Activated naive CD4-positive, alpha-beta T cell treated with anti-CD3 and anti-CD28 coated beads for 36 hours (primary cell): ENCODE measurements at regions of chrX and their contacts with region 1.

Region 1: GRCh38 chrX:23907498-23908218 is at the starts of genes APOO and CXorf58:
- DNase-seq: peak; percentile 93
- H3K4me3 Mint-ChIP-seq: peak within 1 kb of the TSS; percentile 75
- H3K27ac Mint-ChIP-seq: peak within 1 kb of the TSS; percentile 91
- H3K4me1 Mint-ChIP-seq: peaks cover 21% of the 10 kb centered on the region
- H3K27me3 Mint-ChIP-seq: no peaks in the 10 kb centered on the region
- total RNA-seq, gene APOO: 41.3 to 49.5 TPM
- total RNA-seq, gene CXorf58: 0.20 TPM in 1 of 2 experiments, not detected in the other

Region 2: DNA sequence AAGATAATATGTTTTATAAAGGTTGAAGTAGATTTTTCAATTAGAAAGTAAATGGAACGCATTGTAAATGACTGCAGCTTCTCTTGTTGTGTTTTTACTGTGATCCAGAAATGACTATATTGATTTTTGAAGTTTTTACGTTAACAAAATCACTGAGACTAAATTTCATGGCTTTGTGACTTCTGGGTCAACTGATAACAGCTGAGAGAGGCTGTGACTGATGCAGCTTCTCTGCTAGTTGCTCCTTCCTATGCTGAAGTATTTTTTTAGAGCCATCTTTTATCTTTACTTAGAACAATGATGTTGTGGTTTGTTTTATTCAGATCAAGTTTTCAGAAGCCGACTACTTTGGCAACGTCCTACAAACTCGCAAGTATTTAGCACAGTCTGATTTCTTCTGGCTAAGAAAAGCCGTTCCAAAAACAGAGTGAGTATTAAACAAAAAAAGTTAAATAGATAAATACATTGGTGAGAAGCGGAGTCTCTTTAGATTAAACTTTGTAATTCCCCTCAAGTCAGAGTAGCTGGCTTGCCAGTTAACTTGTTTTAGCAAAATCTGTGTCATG is 1729.6 kb before region 1 on chrX:
- CTCF ChIA-PET with region 1: no interaction called
- intact Hi-C with region 1: no loop called
- DNase-seq: no peak
- H3K4me3 Mint-ChIP-seq: no peak overlapping the region
- H3K27ac Mint-ChIP-seq: no peak overlapping the region
- H3K4me1 Mint-ChIP-seq: no peaks in the 10 kb centered on the region
- H3K27me3 Mint-ChIP-seq: no peaks in the 10 kb centered on the region

Region 3: DNA sequence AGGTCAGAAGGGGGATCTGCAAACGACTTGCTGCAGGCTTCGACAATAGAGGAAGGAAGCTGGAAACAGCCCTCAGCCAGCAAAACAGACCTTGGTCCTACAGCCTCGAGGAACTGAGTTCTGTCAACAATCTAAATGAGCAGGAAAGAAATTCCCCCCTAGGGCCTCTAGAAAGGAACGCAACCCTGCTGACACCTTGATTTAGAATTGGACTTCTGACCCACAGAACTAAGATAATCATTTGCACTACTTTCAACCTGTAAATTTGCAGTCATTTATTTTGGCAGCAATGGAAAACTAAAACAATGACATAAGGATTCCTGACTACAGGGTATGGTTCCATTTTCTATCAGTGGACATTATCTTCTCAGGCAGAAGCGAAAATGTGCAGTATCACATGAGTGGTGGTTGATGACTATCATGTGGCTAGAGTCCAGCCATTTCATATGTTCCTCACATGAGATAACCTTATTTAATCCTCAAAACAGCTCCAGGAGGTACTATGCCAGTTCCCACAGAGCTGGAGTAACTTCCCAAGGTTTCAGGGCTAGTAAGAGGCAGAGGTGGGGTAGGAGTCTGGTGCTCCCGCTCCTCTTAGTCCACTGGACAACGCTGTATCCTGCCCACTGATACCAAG is 63.0 kb before region 1 on chrX:
- CTCF ChIA-PET with region 1: no interaction called
- intact Hi-C with region 1: no loop called
- DNase-seq: no peak
- H3K4me3 Mint-ChIP-seq: no peak overlapping the region
- H3K27ac Mint-ChIP-seq: no peak overlapping the region
- H3K4me1 Mint-ChIP-seq: no peaks in the 10 kb centered on the region
- H3K27me3 Mint-ChIP-seq: no peaks in the 10 kb centered on the region

Region 4: DNA sequence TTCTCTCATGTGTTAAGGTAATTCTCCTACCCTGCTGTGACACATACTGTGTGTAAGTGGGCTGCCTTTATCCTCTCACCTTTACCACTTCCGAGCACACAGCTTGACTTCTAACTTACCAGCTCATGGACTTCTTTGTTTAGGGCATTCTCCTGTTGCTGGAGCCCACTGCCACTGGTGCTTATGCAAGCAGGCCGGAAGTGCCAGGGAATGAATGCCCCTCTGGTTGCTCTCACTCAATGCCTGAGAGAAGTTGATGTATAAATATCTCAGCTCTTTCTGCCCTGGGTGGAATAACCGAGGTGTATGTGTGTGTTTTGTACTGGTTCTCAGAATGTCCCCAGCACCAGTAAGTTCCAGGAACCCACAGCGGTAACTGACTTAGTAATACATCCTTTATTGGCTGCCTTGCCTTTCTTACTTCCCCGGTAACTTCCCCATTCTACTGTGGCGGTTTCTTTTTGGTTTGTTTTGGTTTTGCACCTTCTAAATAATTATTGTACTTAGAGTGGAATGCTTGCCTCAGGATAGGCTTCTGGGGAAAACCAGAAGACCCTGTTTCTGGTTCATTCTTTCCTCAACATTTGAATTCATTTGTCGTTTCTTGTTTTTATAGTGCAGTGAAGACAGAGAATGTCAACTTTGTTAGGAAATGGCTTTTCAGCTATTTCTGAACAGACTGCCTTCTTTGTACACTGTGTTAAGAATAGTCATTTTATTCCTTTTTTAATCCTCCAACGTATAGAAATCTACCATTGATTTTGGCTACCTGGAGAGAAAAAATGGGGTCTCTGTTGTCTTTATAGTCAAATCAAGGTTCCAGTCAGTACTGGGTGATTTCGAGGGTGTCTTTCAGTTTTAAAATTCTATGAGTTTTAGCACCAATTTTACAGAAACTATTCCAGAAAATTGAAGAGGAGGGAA is 45.6 kb after region 1 on chrX:
- CTCF ChIA-PET with region 1: no interaction called
- intact Hi-C with region 1: loop called (anchors 1 kb)
- DNase-seq: peak; percentile 70
- H3K4me3 Mint-ChIP-seq: peak overlapping the region; percentile 79
- H3K27ac Mint-ChIP-seq: peak overlapping the region; percentile 97
- H3K4me1 Mint-ChIP-seq: peaks cover 16% of the 10 kb centered on the region
- H3K27me3 Mint-ChIP-seq: no peaks in the 10 kb centered on the region

Region 5: GRCh38 chrX:24024819-24025740 is 117.4 kb after region 1 on chrX:
- CTCF ChIA-PET with region 1: interaction called, 6 read pairs
- intact Hi-C with region 1: loop called (anchors 1 kb)
- DNase-seq: peak; percentile 89
- H3K4me3 Mint-ChIP-seq: peak overlapping the region; percentile 85
- H3K27ac Mint-ChIP-seq: peak overlapping the region; percentile 71
- H3K4me1 Mint-ChIP-seq: peaks cover 20% of the 10 kb centered on the region
- H3K27me3 Mint-ChIP-seq: no peaks in the 10 kb centered on the region

Region 6: DNA sequence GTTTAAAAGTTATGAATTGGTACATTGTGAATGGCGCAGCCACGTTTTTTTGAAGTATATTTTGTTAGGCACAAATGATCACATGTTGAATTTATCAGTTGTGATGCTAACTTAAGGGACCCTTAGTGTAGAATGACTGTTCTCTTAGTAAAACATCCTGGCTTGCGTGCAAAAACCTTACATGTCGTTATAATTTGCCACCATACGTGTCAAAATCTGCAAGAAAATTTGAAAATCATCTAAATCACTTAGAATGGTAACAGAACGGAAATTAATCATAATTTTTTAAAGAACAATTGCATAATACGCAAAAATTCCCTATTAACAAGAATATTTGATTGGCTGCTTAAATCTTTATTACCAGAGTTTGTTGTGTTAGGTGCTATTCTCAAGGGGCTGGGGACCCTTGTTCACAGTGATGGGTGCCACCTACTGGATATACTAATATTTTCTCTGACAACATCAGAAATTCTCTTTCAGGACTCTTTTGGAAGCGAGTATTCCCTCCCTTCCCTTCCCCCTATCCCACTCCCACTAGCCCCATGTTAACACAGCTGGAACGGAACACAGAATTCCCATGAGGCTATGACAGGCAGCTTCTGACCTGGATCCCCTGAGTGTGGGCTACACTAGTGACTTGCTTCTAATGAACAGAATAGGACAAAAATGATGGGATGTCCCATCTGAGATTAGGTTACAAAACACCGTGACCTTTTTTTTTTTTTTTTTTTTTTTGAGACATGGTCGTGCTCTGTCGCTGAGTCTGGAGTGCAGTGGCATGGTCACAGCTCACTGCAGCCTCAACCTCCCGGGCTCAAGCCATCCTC is 334.4 kb after region 1 on chrX:
- CTCF ChIA-PET with region 1: no interaction called
- intact Hi-C with region 1: loop called (anchors 1 kb)
- DNase-seq: peak; percentile 12
- H3K4me3 Mint-ChIP-seq: no peak overlapping the region
- H3K27ac Mint-ChIP-seq: no peak overlapping the region
- H3K4me1 Mint-ChIP-seq: peaks cover 11% of the 10 kb centered on the region
- H3K27me3 Mint-ChIP-seq: no peaks in the 10 kb centered on the region

Region 7: GRCh38 chrX:24647257-24648058 is 739.8 kb after region 1 on chrX and contains the start of gene PCYT1B:
- CTCF ChIA-PET with region 1: no interaction called
- intact Hi-C with region 1: no loop called
- DNase-seq: peak; percentile 72
- H3K4me3 Mint-ChIP-seq: peak within 1 kb of the TSS; percentile 68
- H3K27ac Mint-ChIP-seq: no peak within 1 kb of the TSS
- H3K4me1 Mint-ChIP-seq: peaks cover 11% of the 10 kb centered on the region
- H3K27me3 Mint-ChIP-seq: peaks cover 6% of the 10 kb centered on the region
- total RNA-seq, gene PCYT1B: 0.17 TPM in 1 of 2 experiments, not detected in the other